ENCODE measurements at regions of chr2 and their contacts with region 1.

Region 1: GRCh38 chr2:11124503-11125068 is 30.7 kb upstream of the SLC66A3 start:
- DNase-seq: peak; percentile 77 to 85
- ATAC-seq: peak; percentile 83 to 93
- H3K4me3 ChIP-seq: no peak overlapping the region
- H3K27ac ChIP-seq: no peak overlapping the region; a peak in 1 of 6 replicates
- H3K4me1 ChIP-seq: 0 out of 3 replicates have a peak, but pooled peaks cover 2% of the 10 kb centered on the region
- CTCF ChIP-seq: peak; percentile 96
- EP300 ChIP-seq: no peak
- POLR2A ChIP-seq: no peak
- RAD21 ChIP-seq: peak; percentile 99

Region 2: GRCh38 chr2:10812362-10813162 is 312.0 kb before region 1 on chr2 and contains the start of gene PDIA6:
- CTCF ChIA-PET with region 1: interaction called, 36 read pairs
- POLR2A ChIA-PET with region 1: interaction called, 3 read pairs
- DNase-seq: peak; percentile 97
- ATAC-seq: peak; percentile 94 to 98
- H3K4me3 ChIP-seq: peak within 1 kb of the TSS; percentile 85
- H3K27ac ChIP-seq: peak within 1 kb of the TSS; percentile 90 to 93
- H3K4me1 ChIP-seq: peaks cover 18% of the 10 kb centered on the region
- CTCF ChIP-seq: no peak
- EP300 ChIP-seq: no peak
- POLR2A ChIP-seq: peak; percentile 76
- RAD21 ChIP-seq: no peak
- polyA plus RNA-seq, gene PDIA6: 292 and 442 TPM in 2 replicates

Region 3: DNA sequence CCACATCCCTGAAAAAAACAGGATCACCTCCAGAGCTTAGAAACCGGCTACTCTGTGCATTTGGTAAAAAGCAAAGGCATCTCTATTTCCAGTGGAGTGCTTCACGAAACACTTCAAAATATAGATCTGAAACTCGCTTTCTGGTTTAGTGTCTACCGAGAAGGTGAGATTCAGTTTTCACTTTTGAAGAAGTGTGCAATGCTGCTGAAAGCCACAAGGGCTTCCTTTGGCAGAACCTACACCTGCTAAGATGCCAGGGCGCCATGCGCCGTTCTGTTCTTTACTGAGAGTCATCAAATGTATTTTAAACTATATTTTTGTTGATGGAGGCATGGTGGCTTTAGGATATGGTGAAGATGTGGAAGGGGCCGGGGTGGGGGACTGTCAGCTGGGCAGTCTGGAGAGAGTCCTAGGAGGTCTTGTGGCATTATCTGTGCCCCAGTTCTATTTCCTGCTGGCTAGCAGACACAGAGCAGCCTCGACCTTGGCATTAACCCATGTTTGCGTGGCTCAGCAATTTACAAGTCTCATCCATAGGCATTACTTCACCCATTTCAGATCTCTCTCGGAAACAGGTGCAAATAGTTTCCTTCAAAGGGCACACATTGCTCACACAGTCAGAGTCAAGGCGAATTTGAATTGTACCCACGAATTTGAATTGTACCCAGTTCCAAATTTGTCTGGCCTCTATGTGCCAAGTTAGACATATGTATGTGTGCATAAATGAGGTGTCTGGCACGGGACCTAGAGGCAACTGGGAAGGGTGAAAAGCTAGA is 259.5 kb before region 1 on chr2:
- CTCF ChIA-PET with region 1: interaction called, 10 read pairs
- POLR2A ChIA-PET with region 1: no interaction called
- DNase-seq: no peak
- ATAC-seq: peak; percentile 36 to 69; a peak in 3 of 6 replicates
- H3K4me3 ChIP-seq: no peak overlapping the region
- H3K27ac ChIP-seq: no peak overlapping the region
- H3K4me1 ChIP-seq: no peaks in the 10 kb centered on the region; the same call in 2 of the 3 replicates
- CTCF ChIP-seq: no peak
- EP300 ChIP-seq: no peak
- POLR2A ChIP-seq: no peak
- RAD21 ChIP-seq: no peak

Region 4: DNA sequence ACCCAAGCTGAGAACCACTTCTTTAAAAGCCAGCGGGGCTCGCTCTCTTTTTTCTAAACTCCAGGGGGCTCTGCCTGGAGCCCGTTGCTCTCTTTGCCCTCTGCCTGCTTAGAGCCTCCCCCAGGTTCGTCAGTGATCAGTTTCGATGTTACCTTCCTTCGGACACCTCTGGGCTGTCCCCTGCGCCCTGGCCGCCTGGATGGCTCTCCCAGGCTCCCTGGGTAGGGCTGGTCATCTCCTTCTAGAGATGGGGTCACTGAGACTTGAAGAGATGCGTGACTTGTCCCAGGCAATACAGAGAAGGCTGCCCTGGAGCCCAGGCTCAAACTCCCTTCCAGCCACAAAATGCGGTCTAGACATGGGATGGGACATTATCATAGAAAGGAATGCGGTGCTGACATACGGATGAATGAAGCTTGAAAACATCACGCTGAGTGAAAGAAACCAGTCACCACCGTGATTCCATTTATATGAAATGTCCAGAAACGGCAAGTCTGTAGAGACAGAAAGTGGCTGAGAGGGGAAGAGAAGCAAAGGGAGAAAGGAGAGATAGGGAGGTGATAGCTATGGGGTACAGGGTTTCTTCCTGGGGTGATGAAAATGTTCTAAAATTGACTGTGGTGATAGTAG is 198.3 kb before region 1 on chr2:
- CTCF ChIA-PET with region 1: interaction called, 10 read pairs
- POLR2A ChIA-PET with region 1: no interaction called
- DNase-seq: no peak
- ATAC-seq: no peak; a peak in 1 of 6 replicates
- H3K4me3 ChIP-seq: no peak overlapping the region
- H3K27ac ChIP-seq: 0 out of 6 replicates have a peak overlapping the region, but pooled peaks of 1 of the 2 experiments have one; percentile 5
- H3K4me1 ChIP-seq: 0 out of 3 replicates have a peak, but pooled peaks cover 6% of the 10 kb centered on the region
- CTCF ChIP-seq: no peak
- EP300 ChIP-seq: no peak
- POLR2A ChIP-seq: no peak
- RAD21 ChIP-seq: no peak

Region 5: DNA sequence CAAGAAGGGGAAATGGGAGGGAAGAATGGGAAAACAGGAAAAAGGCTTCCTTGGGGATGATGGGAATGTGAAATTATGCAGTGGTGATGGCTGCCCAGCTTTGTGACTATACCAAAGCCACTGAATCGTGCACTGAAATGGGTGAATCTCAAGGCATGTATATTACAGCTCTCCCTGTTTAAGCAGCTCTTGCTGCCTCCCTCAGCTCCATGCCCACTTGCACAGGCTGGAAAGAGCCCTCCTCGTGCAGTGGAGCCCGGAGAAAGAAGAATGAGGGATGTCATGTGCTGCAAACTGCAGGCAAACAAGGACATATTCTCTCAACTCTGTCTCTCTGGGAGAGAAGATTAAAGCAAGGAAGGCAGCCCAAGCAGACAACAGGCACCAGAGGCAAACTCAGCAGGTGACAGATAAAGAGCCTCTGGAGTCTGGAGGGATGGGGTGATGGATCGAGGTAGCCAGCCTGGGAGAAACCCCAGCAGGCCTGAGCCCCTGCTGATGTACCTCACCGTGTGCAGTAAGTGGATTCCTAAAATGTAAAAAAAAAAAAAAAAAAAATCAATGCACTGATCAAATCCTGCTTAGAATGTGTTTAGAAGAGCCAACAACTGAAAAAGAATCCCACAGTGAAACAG is 31.8 kb before region 1 on chr2:
- CTCF ChIA-PET with region 1: interaction called, 10 read pairs
- POLR2A ChIA-PET with region 1: no interaction called
- DNase-seq: no peak
- ATAC-seq: peak in 1 of 2 experiments; percentile 39; a peak in 3 of 6 replicates
- H3K4me3 ChIP-seq: no peak overlapping the region
- H3K27ac ChIP-seq: no peak overlapping the region
- H3K4me1 ChIP-seq: peaks cover 11% of the 10 kb centered on the region; the same call in 2 of the 3 replicates
- CTCF ChIP-seq: no peak
- EP300 ChIP-seq: no peak
- POLR2A ChIP-seq: no peak
- RAD21 ChIP-seq: no peak

Region 6: DNA sequence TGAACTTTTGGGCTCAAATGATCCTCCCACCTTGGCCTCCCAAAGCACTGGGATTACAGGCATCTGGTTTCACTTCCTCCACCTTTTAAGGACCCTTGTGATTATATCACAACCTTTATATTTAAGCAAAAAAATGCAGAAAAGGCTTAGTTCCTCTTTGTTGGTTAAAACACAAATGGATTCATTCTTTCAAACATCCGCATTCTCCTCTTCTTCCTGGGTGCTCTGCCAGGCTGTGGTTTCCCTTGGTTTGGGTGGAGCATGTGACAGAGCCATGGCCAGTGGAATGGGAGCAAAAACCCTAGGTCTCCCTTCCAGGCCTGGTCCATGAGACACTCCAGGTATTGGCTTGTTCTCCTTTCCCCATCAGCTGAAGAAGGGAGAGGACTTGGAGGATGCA is 20.8 kb after region 1 on chr2:
- CTCF ChIA-PET with region 1: interaction called, 224 read pairs
- POLR2A ChIA-PET with region 1: no interaction called
- DNase-seq: no peak
- ATAC-seq: 0 out of 6 replicates have a peak, but pooled peaks of 1 of the 2 experiments have one; percentile 14
- H3K4me3 ChIP-seq: no peak overlapping the region
- H3K27ac ChIP-seq: no peak overlapping the region
- H3K4me1 ChIP-seq: 0 out of 3 replicates have a peak, but pooled peaks cover 4% of the 10 kb centered on the region
- CTCF ChIP-seq: no peak
- EP300 ChIP-seq: no peak
- POLR2A ChIP-seq: no peak
- RAD21 ChIP-seq: no peak

Region 7: GRCh38 chr2:11498543-11499080 is 374.0 kb after region 1 on chr2:
- CTCF ChIA-PET with region 1: no interaction called
- POLR2A ChIA-PET with region 1: no interaction called
- DNase-seq: no peak
- ATAC-seq: peak; percentile 44 to 67; a peak in 5 of 6 replicates
- H3K4me3 ChIP-seq: no peak overlapping the region
- H3K27ac ChIP-seq: 0 out of 6 replicates have a peak overlapping the region, but pooled peaks of 1 of the 2 experiments have one; percentile 14
- H3K4me1 ChIP-seq: peaks cover 8% of the 10 kb centered on the region
- CTCF ChIP-seq: no peak
- EP300 ChIP-seq: no peak
- POLR2A ChIP-seq: no peak
- RAD21 ChIP-seq: no peak

Measured in A549 (cell line).